ENCODE measurements at regions of chr1 and their contacts with region 1.

Region 1: DNA sequence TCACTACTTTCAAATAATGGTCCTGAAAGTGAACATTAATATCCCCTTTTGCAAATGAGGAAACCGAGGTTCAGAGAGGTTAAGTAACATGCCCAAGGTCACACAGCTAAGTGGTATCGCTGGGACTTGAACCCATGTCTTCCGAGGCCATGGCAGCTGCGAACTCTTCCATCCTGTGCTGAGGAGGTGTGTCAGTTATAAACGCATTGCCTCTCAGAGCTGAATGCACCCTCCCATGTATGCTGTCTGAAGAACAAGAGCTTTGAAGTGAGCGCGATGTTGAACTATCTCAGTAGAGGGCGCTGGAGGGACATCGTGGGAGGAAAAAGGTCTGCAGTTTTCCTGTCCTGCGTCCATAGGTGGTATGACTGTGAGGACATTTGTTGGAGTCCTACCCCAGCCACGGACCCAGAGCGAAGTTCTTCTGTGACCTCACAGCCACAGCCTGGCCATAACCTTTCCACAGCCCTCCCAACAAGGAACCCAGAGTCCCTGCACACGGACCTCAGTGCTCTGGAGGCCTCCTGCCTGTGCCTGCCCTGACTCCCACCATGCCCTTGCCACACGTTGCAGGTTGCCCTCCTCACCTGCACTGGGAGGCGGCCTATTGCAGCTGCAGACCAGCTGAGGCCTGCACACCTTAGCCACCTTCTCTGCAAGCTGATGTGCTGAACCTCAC is 7.5 kb downstream of the MYOC start:
- DNase-seq: peak; percentile 82 to 89
- H3K4me3 ChIP-seq: peak overlapping the region in 1 of 4 experiments; percentile 14; a peak in 1 of 8 replicates
- H3K27ac ChIP-seq: no peak overlapping the region
- H3K4me1 ChIP-seq: peaks cover 2 to 15% (median 7%) of the 10 kb centered on the region in 4 experiments
- H3K27me3 ChIP-seq: no peaks in the 10 kb centered on the region
- CTCF ChIP-seq: peak; percentile 69 to 99 (median 89)
- EP300 ChIP-seq: no peak
- POLR2A ChIP-seq: no peak
- RAD21 ChIP-seq: peak; percentile 89 to 91

Region 2: DNA sequence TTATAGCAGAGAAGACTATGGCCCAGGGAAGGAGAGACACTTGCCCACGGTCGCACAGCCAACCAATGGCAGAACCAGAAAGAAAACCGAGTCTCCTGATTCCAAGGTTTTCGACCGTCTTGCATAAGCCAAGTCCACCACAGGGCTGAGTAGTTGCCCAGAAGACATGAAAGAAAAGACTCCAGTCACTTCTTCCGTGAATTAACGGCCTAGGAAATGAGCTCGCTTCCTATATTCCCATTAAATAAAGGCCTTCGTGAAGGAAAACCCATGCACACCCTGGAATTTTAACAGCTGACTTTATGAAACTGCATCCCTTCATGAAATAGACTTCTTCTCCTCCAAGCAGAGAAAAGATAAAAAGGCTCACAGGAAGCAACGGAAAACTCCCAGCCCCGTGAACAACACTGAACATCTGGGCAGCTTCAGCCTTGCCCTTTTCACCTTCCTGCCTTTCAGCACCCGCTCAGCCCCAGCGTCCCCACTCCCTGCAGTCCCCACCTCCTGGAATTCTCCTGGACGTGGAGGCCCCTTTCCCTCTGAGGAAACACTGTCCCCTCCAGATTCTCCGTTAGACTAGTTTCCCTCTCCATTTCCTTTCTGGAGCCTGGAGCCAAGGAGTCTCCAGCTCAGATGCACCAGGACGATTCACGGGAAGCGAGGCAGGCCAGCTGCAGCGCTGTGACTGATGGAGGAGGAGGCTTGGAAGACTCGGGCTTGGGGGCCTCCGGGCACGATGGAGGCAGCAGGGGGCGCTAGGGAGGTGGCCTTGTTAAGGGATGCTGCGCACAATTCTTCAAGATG is 10.2 kb after region 1 on chr1:
- CTCF ChIA-PET with region 1: interaction called, 143 read pairs
- POLR2A ChIA-PET with region 1: interaction called, 7 read pairs
- DNase-seq: peak; percentile 41 to 98
- H3K4me3 ChIP-seq: no peak overlapping the region; a peak in 2 of 8 replicates
- H3K27ac ChIP-seq: no peak overlapping the region
- H3K4me1 ChIP-seq: peaks cover 0 to 5% (median 0%) of the 10 kb centered on the region in 4 experiments; a peak in 1 of 7 replicates
- H3K27me3 ChIP-seq: no peaks in the 10 kb centered on the region
- CTCF ChIP-seq: peak; percentile 79 to 91 (median 85)
- EP300 ChIP-seq: no peak
- POLR2A ChIP-seq: no peak
- RAD21 ChIP-seq: peak; percentile 65 to 71

Region 3: GRCh38 chr1:171715813-171716251 is 70.9 kb after region 1 on chr1:
- CTCF ChIA-PET with region 1: interaction called, 66 read pairs
- POLR2A ChIA-PET with region 1: no interaction called
- DNase-seq: no peak
- H3K4me3 ChIP-seq: no peak overlapping the region
- H3K27ac ChIP-seq: no peak overlapping the region
- H3K4me1 ChIP-seq: no peaks in the 10 kb centered on the region
- H3K27me3 ChIP-seq: no peaks in the 10 kb centered on the region
- CTCF ChIP-seq: peak in 2 of 3 experiments; percentile 13 to 29; a peak in 2 of 4 replicates
- EP300 ChIP-seq: no peak
- POLR2A ChIP-seq: no peak
- RAD21 ChIP-seq: peak; percentile 34 to 35; a peak in 3 of 4 replicates

Region 4: GRCh38 chr1:171754353-171754705 is 109.4 kb after region 1 on chr1:
- CTCF ChIA-PET with region 1: interaction called, 10 read pairs
- POLR2A ChIA-PET with region 1: no interaction called
- DNase-seq: no peak
- H3K4me3 ChIP-seq: no peak overlapping the region
- H3K27ac ChIP-seq: peak overlapping the region; percentile 7; the same call in 1 of the 2 replicates
- H3K4me1 ChIP-seq: peaks cover 2 to 12% (median 6%) of the 10 kb centered on the region in 4 experiments; a peak in 4 of 7 replicates
- H3K27me3 ChIP-seq: peaks cover 0 to 1% (median 0%) of the 10 kb centered on the region in 4 experiments; a peak in 1 of 7 replicates
- CTCF ChIP-seq: no peak
- EP300 ChIP-seq: no peak
- POLR2A ChIP-seq: no peak
- RAD21 ChIP-seq: no peak

Region 5: DNA sequence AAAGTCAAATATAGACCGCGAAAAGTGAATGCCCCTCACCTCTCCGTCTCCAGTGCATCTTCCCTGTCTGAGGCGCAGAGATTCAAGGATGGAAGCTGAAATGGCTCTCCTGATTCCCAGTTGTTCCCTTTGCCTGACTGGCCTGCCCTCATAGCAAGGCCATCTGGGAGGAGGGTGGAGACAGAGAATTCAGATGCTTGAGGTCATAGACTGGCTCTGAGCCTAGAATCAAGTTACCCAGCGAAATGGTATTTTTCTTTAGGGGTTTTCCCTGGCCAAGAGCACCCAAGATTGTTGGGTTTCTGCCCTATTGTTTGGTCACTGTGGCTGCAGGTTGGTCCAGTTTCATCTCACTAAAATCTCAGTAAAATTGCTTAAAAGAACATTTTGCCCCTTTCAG is 143.8 kb after region 1 on chr1:
- CTCF ChIA-PET with region 1: interaction called, 12 read pairs
- POLR2A ChIA-PET with region 1: no interaction called
- DNase-seq: no peak
- H3K4me3 ChIP-seq: no peak overlapping the region
- H3K27ac ChIP-seq: no peak overlapping the region
- H3K4me1 ChIP-seq: no peaks in the 10 kb centered on the region
- H3K27me3 ChIP-seq: no peaks in the 10 kb centered on the region
- CTCF ChIP-seq: no peak
- EP300 ChIP-seq: no peak
- POLR2A ChIP-seq: no peak
- RAD21 ChIP-seq: no peak

Measured in H1 (cell line).